GM10248 (cell line): ENCODE measurements at regions of chr16 and their contacts with region 1.

Region 1: DNA sequence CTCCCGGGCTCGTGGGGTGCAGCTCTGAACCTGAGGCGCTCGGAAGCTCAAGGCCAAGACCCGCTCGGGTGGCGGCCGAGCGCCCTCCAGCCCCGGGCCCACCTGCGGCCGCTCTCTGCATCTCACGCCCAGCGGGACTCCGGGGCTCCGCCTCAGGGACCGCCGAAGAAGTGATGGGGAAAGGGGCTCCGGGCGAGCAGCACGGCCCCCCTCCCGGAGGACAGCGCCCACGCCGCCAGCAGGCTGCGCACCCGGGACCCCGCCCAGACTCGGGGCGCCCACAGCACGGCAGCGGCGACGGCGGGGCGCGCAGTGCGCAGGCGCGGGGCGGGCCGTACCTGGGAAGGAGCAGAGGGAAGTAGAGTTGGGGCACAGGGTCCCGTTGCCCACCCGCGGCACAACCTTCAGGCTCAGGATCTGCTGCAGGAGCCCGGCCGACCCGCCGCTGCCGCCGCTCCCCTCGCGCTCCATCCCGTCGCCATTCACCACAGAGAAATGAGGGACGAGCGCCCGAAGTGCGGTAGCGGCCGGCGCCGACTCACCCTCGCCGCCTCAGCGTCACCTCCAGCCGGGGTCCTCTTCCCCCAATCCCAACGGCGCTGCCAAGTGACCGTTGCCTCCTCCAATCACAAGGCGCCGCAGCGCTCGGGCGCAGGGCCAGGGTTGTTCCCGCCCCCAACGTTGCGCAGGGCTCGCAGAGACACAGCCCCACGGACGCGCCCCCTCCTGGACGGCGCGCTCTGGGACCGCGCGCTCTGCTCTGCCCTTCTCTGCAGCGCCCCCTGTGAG is at the start of gene TMEM170A:
- DNase-seq: peak; percentile 97
- CTCF ChIP-seq: peak; percentile 100

Region 2: GRCh38 chr16:74942977-74943918 is 521.1 kb before region 1 on chr16:
- CTCF ChIA-PET with region 1: no interaction called
- POLR2A ChIA-PET with region 1: no interaction called
- DNase-seq: no peak
- CTCF ChIP-seq: no peak

Region 3: DNA sequence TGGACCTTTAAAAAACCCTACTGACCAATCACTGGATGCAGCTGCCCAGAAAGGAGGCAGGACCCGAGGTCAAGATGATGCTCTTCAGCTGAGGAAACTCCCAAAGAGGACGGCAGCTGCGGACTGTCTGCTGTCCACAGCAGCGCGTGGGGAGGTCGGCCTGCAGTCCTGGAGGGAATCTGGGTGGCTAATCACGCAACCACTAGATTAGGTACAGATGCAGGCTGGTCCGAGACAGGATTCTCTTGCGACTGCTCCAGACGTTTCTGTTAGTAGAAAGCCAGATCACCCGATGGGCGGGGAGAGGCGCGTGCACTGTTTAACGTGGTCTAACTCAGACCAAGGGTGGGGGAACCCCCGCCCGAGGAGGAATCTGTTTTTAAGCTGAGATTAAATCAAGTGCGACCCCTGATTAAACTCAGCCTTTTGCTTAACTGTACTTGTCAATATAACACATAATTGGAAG is 266.2 kb before region 1 on chr16:
- CTCF ChIA-PET with region 1: interaction called, 23 read pairs
- POLR2A ChIA-PET with region 1: interaction called, 4 read pairs
- DNase-seq: no peak
- CTCF ChIP-seq: no peak

Region 4: GRCh38 chr16:75243667-75244224 is 220.6 kb before region 1 on chr16:
- CTCF ChIA-PET with region 1: no interaction called
- POLR2A ChIA-PET with region 1: no interaction called
- DNase-seq: no peak
- CTCF ChIP-seq: no peak

Region 5: GRCh38 chr16:75443298-75443697 is 21.0 kb before region 1 on chr16:
- CTCF ChIA-PET with region 1: interaction called, 12 read pairs
- POLR2A ChIA-PET with region 1: no interaction called
- DNase-seq: no peak
- CTCF ChIP-seq: no peak

Region 6: DNA sequence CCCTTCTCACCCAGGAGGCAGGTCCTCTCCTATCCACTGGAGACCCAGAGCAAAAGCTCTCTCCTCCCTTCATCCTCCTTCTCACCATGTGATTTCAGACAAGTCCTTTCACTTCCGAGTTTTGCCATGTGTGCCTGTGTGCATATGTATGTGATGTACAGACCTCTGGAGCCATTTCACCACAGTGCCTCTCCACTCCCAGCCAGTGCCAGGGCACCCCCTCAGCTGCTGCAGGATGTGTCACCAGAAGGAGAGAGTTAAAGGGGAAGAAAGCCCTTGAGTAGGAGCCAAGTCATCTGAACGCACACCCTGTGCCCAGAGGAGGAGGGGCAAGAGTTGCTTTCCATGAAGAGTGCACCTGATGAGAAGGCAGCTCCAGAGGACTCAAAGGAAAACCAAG is 13.8 kb after region 1 on chr16:
- CTCF ChIA-PET with region 1: interaction called, 258 read pairs
- POLR2A ChIA-PET with region 1: no interaction called
- DNase-seq: no peak
- CTCF ChIP-seq: no peak

Region 7: DNA sequence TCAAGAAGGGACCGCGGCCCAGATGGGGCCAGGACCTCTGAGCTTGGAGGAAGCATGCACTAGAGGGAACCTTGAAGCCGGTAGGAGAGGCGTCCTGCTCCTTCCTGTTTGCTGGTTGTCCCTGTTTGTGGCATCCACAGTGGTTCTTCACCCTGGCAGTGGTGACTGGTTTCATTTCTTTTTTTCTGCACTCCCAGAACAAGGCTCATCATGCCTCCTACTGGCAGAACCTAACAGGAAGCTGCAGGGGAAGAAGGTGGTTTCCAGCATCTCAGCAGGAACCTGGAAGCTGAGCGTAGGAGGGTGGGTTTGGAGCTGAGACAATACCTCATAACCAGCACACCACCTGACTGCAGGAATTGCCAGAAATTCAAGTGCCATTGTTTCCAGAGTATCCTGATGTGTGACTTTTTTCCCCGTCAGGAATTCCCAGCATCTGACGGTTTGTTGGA is 85.9 kb after region 1 on chr16:
- CTCF ChIA-PET with region 1: interaction called, 15 read pairs
- POLR2A ChIA-PET with region 1: no interaction called
- DNase-seq: peak; percentile 58
- CTCF ChIP-seq: peak; percentile 64

Region 8: GRCh38 chr16:76381096-76381495 is 916.8 kb after region 1 on chr16:
- CTCF ChIA-PET with region 1: no interaction called
- POLR2A ChIA-PET with region 1: no interaction called
- DNase-seq: no peak
- CTCF ChIP-seq: no peak